Posterior cingulate gyrus (tissue), 11 donors: ENCODE measurements at regions of chr2 and their contacts with region 1.

Region 1: DNA sequence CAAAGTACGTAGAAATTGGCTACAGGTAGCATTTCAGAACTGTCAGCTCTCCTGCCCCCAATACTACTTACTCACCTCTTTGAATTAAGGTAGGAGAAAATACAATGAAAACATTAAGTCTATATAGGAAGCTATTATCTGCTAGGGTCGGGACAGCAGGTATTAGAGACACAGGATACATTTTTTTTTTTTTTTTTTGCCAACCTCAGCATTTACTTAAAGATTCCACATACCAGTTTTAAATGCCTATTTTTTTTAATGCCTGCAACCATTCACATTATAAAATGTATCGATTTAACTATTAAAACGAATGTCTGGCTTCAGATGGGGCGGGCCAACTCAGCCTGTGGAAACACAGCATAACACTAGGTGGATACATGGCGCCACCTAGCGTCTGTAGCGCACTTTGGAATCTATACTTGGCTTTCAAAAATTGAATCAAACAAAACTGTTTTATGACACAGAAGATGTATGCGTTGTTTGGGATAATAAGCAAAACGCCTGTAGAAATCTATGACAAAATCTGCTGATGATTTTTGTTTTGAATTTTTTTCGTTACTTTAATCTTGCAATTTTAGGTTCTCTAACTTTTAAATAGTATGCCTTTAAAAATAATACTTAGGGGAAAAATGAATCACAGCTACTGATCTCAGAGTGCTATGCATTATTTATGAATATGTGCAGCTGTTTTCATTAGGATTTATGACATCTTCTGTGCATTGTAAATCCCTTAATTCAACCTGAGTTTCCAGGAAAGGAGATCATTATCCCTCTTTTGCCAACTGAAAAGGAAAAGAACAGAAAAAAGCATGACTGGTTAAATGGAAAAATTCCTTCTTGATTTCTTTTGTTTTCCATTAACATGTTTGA is 261.0 kb downstream of the NYAP2 start:
- DNase-seq: peak; percentile 55 to 96 (median 85)

Region 2: GRCh38 chr2:225122583-225123486 is 537.7 kb before region 1 on chr2:
- intact Hi-C with region 1: loop called (anchors 1 kb)
- DNase-seq: peak in 2 of 10 donors; percentile 30 to 32

Region 3: DNA sequence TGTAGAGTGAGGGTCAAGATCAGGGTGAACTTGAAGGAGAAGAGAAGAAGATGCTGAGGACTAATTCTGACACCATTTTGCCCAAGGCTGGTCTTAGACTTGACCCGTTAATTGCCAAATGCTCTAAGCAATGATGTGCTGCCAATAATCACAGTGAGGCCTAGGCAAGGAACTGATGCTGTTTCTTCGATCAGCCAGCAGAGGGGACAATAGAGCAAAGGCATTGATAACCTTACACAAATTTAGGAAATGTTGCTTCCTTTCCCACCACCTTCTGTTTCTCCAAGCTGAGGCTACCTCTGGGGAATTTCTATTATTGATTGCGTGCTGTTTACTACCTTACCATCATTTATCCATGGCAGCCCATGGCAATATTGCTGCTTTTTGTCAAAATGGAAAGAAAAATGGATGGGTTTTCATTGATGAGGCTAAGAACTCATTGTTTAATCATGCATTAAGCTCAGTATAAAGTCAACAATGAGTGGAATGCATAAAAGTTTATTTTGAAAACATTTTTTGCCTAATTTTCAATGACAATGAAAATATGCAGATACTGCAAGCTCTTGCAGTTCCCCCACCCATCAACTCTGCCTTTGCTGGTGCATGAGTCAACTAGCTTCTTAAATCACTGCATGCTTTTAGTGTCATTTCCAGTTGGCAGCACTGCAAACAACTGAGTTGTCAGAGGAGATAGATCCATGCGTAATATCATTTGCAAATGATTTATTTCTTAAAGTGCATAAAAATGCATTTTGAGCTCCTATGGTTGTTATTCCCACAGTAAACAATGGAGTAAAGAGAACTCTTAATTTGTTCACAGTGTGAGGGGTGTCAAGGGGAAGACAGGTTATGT is 377.4 kb before region 1 on chr2:
- intact Hi-C with region 1: loop called (anchors 1 kb)
- DNase-seq: peak in 2 of 10 donors; percentile 9 to 49

Region 4: GRCh38 chr2:225614915-225615314 is 45.6 kb before region 1 on chr2:
- intact Hi-C with region 1: no loop called
- DNase-seq: no peak

Region 5: DNA sequence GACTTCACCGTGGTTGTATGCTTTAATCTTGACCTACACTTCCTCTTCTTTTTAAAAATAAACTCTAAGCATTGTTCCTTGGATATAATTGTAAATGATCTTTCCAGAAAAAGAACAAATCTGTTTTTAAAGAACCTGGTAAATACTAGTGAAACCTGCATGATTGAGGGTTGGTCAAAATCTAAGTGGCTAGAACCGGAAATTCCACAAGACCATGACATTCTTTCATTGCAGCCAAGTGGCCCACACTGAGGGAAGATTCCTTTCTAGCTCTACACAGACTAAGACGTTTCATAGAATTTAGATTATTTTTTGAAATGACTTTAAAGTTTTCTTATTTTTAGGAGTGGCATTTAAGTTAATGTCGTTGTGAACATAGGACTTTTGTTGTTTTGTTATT is 95.7 kb after region 1 on chr2:
- intact Hi-C with region 1: no loop called
- DNase-seq: no peak